Tibial artery (tissue), 4 donors: ENCODE measurements at regions of chr11 and their contacts with region 1.

Region 1: GRCh38 chr11:22337596-22338485 is at the start of gene SLC17A6:
- DNase-seq: no peak
- H3K4me3 ChIP-seq: no peak within 1 kb of the TSS
- H3K27ac ChIP-seq: no peak within 1 kb of the TSS
- H3K4me1 ChIP-seq: peaks cover 0 to 4% (median 2%) of the 10 kb centered on the region in 4 donors
- H3K27me3 ChIP-seq: peaks cover 0 to 52% of the 10 kb centered on the region in 2 donors
- CTCF ChIP-seq: no peak

Region 2: GRCh38 chr11:22787551-22788162 is 449.8 kb after region 1 on chr11:
- intact Hi-C with region 1: loop called (anchors 5 kb)
- DNase-seq: no peak
- H3K4me3 ChIP-seq: no peak overlapping the region
- H3K27ac ChIP-seq: no peak overlapping the region
- H3K4me1 ChIP-seq: no peaks in the 10 kb centered on the region
- H3K27me3 ChIP-seq: no peaks in the 10 kb centered on the region
- CTCF ChIP-seq: peak; percentile 54 to 57

Region 3: GRCh38 chr11:23192256-23192655 is 854.4 kb after region 1 on chr11:
- intact Hi-C with region 1: no loop called
- DNase-seq: no peak
- H3K4me3 ChIP-seq: no peak overlapping the region
- H3K27ac ChIP-seq: no peak overlapping the region
- H3K4me1 ChIP-seq: no peaks in the 10 kb centered on the region
- H3K27me3 ChIP-seq: no peaks in the 10 kb centered on the region
- CTCF ChIP-seq: no peak